Right lobe of liver (tissue), 6 donors: ENCODE measurements at regions of chr7 and their contacts with region 1.

Region 1: GRCh38 chr7:29105752-29106668 is 40.3 kb downstream of the CPVL start:
- DNase-seq: peak in 1 of 3 donors; percentile 52
- ATAC-seq: peak; percentile 88 to 92 (median 89)
- H3K4me3 ChIP-seq: no peak overlapping the region
- H3K27ac ChIP-seq: no peak overlapping the region
- H3K4me1 ChIP-seq: peaks cover 0 to 4% (median under 1%) of the 10 kb centered on the region in 4 donors
- H3K27me3 ChIP-seq: no peaks in the 10 kb centered on the region
- CTCF ChIP-seq: peak; percentile 82 to 85 (median 82)
- POLR2A ChIP-seq: no peak

Region 2: DNA sequence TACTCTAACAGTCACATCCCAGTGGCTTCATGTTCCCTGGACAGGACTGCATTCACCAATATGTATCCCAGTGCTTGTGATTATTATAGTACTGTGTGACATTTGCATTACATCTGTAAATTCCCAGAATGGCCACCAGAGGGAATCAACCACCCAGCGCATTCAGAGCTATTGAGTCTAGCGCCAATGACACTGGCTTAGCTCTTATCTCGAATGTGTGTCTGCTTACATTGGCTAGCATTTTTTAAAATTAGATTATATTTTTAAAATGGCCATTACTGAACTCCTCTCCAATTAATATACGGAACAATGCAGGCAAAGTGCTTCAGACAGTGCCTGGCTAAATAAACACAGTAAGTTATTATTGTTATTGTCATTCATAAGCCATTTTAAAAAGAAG is 184.2 kb before region 1 on chr7:
- intact Hi-C with region 1: loop called (anchors 5 to 10 kb)
- DNase-seq: peak in 1 of 3 donors; percentile 62
- ATAC-seq: peak; percentile 97 to 99 (median 97)
- H3K4me3 ChIP-seq: no peak overlapping the region
- H3K27ac ChIP-seq: no peak overlapping the region
- H3K4me1 ChIP-seq: peaks cover 0 to 16% (median 7%) of the 10 kb centered on the region in 4 donors
- H3K27me3 ChIP-seq: no peaks in the 10 kb centered on the region
- CTCF ChIP-seq: peak; percentile 85 to 91 (median 88)
- POLR2A ChIP-seq: no peak

Region 3: GRCh38 chr7:28926871-28927597 is 179.0 kb before region 1 on chr7:
- intact Hi-C with region 1: loop called (anchors 5 to 10 kb)
- DNase-seq: peak; percentile 68 to 69 (median 69)
- ATAC-seq: peak; percentile 96 to 98 (median 96)
- H3K4me3 ChIP-seq: peak overlapping the region; percentile 26 to 55 (median 51)
- H3K27ac ChIP-seq: no peak overlapping the region
- H3K4me1 ChIP-seq: peaks cover 0 to 14% (median 5%) of the 10 kb centered on the region in 4 donors
- H3K27me3 ChIP-seq: no peaks in the 10 kb centered on the region
- CTCF ChIP-seq: peak; percentile 81 to 87 (median 82)
- POLR2A ChIP-seq: no peak